HEK293 (cell line): ENCODE measurements at regions of chr17 and their contacts with region 1.

Region 1: DNA sequence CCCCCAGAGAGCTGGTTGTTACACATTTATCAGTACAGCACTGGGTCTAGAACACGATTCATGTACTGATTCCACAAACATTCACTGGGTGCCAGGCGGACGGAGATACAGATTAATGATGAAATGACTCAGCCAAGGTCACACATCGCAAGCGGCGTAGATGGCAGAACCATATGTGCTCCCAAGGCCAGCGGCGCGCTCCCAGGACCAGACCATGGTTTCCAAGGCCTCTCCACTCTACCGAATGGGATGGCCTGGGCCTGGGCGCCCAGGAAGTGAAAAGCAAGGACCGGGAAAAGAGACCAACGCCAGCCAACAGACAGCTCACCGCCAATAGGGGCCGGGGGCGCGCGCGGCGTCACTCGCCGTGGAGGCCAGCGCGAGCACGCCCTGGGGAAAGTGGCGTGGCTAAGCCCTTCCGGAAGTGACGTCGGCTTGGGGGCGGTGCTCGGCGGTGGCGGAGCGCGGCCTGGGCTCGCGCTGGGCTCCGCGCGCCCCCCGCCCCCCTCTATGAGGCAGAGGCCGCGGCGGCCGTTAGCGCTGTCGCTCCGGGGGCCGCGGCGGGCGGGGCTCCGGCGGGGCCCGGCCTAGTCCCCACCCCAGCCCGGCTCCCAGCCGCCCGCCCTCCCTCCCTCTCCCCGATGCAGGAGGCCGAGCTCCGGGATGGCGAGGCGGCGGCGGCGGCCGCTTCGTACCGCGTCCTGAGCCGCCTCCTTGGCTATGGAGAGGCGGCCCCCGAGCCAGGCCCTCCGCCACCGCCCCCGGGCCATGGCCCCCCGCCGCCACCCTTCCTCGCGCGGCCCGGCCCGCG is at the start of gene SOCS7:
- H3K4me3 ChIP-seq: peak within 1 kb of the TSS; percentile 75
- H3K27ac ChIP-seq: peak within 1 kb of the TSS; percentile 83
- H3K4me1 ChIP-seq: peaks cover 11% of the 10 kb centered on the region
- CTCF ChIP-seq: 0 out of 2 replicates have a peak, but pooled peaks have one; percentile 21

Region 2: DNA sequence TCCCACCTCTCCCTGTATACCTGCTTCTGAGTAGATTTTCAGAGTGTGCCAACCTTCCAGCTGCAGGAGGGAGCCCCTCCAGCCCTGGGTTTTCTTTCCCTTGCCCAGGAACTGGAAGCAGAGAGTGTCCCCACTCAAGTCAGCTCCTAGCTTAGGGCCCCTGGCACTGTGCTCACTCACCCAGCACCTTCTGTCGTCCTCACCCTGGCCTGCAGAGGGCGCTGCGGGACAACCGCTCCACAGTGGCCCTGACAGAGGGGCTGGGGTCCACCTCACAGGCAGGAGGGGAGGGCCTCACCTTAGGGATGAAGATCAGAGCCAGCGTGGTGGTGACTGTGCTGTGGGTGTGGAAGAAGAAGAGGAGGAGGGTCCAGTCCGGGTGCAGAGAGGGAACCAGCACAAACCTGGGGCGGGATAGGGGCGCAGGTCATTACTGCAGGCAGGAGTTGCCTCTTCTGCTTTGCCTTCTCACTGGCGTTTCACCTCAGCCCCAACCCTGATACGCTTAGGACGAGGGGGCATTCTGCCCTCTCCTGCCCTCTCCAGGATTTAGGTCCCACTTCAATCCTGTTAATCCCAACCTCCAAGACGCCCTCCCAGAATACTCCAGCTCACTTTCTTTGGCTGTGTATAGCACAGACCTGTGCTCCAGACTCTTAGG is 17.9 kb before region 1 on chr17:
- CTCF ChIA-PET with region 1: interaction called, 186 read pairs
- POLR2A ChIA-PET with region 1: interaction called, 3 read pairs
- H3K4me3 ChIP-seq: no peak overlapping the region
- H3K27ac ChIP-seq: no peak overlapping the region
- H3K4me1 ChIP-seq: no peaks in the 10 kb centered on the region
- CTCF ChIP-seq: peak; percentile 83

Region 3: GRCh38 chr17:38379438-38379837 is 27.8 kb after region 1 on chr17:
- CTCF ChIA-PET with region 1: interaction called, 24 read pairs
- POLR2A ChIA-PET with region 1: interaction called, 4 read pairs
- H3K4me3 ChIP-seq: no peak overlapping the region
- H3K27ac ChIP-seq: no peak overlapping the region
- H3K4me1 ChIP-seq: no peaks in the 10 kb centered on the region
- CTCF ChIP-seq: no peak

Region 4: DNA sequence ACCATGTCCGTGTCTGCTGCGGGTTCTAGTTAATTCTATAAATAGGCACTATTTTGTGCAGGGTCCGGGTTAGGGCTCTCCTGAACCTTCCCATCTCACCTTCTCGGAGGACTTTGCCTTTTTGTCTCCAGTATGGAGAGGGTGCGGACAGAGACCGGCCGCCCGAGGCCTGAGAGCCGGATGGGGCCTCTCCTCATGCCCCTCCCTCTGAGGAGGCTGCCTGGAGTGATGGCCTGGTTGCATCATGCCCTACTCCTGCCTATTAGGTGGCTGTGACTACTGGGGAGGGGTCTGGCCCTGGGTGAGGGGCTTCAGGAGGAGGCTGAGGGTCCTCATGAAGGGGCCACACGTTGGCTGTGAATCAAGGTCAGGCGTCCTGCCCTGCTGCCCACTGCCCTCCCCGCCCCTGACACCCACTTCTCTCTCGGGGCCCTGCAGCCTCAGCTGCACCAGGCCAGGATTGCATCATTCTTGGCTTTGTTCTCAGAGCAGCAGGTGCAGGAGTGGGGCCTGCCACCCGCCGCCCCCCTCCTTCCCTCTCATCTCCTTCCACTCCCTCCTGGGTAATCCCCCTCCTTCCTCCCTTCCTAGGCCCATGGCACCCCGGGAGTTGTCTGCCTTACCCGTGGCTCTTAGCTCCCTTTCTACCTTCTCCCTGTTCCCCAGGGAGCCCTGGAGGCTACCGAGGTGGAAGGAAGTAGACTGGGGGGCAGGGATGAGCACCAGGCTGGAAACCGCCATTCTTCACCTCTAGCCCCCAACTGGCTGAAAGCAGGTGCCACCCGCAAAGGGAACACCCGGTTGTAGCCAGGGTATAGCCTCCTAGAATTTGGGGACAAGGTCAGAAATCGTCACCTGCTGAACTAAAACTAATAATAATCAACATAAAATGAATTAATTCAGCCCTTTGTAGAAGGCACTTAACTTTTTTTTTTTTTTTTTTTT is 63.9 kb after region 1 on chr17:
- CTCF ChIA-PET with region 1: interaction called, 324 read pairs
- POLR2A ChIA-PET with region 1: interaction called, 45 read pairs
- H3K4me3 ChIP-seq: peak overlapping the region; percentile 13
- H3K27ac ChIP-seq: peak overlapping the region; percentile 93
- H3K4me1 ChIP-seq: peaks cover 14% of the 10 kb centered on the region
- CTCF ChIP-seq: peak; percentile 14; the same call in 1 of the 2 replicates

Region 5: GRCh38 chr17:38485146-38485468 is 133.5 kb after region 1 on chr17:
- CTCF ChIA-PET with region 1: interaction called, 11 read pairs
- POLR2A ChIA-PET with region 1: no interaction called
- H3K4me3 ChIP-seq: no peak overlapping the region
- H3K27ac ChIP-seq: no peak overlapping the region
- H3K4me1 ChIP-seq: no peaks in the 10 kb centered on the region
- CTCF ChIP-seq: no peak

Region 6: GRCh38 chr17:38685491-38685890 is 333.9 kb after region 1 on chr17:
- CTCF ChIA-PET with region 1: no interaction called
- POLR2A ChIA-PET with region 1: no interaction called
- H3K4me3 ChIP-seq: no peak overlapping the region
- H3K27ac ChIP-seq: no peak overlapping the region
- H3K4me1 ChIP-seq: no peaks in the 10 kb centered on the region
- CTCF ChIP-seq: no peak

Region 7: DNA sequence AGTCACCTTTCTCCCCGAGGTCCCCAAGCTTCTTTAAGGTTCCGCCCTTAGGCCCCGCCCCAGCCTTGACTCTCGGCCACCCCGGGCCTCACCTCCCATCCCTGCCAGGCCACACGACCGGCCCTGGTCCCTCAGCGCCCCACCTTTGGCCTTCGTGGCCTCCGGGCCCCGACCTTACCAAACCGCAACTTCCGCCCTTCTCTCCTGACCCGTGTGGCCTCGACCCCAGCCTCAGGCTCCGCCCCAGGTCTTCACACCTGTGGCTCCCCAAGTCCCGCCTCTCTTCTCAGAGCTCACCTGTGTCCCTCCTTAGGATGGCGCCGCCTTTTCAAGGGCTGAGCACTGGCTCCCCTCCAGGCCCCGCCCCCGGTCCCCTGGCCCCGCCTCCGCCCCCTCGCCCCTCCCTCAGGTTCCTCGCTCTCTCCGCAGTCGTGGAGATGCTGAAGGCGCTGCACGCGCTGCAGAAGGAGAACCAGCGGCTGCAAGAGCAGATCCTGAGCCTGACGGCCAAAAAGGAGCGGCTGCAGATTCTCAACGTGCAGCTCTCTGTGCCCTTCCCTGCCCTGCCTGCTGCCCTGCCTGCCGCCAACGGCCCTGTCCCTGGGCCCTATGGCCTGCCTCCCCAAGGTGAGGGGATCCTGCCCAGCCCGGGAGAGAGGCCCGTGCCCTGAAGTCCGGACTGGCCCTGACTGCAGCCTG is 368.5 kb after region 1 on chr17:
- CTCF ChIA-PET with region 1: no interaction called
- POLR2A ChIA-PET with region 1: no interaction called
- H3K4me3 ChIP-seq: no peak overlapping the region
- H3K27ac ChIP-seq: no peak overlapping the region
- H3K4me1 ChIP-seq: no peaks in the 10 kb centered on the region
- CTCF ChIP-seq: no peak